ENCODE measurements at regions of chr6 and their contacts with region 1.

Region 1: DNA sequence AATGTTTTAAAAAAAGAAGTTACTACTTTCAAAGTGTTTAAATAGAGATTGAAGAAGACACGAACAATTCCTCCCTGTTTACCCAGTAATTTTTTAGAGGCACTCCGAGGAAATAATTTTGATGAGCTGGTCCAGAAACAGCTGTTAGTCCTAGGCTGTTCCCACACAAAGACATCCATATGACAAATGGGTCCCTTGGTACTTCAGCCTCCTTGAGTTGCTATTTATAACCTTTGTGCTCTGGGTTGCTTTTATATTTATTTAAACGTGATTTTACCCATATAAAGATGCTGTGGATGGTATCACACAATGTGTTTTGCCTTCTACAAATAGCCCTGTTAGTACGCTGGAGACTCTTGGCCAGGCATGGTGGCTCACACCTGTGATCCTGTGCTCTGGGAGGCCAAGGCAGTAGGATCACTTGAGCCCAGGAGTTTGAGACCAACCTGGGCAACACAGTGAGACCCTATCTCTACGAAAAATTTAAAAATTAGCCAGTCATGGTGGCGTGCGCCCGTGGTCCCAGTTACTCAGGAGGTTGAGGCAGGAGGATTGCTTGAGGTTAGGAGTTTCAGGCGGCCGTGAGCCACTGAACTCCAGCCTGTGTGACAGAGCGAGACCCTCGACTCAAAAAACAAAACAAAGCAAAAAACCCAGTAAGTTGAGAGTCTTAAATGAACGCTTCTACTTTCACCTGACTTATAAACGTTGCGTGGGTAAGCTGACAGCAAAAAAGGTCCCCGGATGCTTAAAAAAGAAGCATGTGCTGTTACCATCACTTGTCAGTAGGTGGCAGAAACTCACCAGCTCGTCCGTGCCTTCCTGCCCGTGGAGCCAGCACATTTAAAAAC is 56.9 kb upstream of the ARMH2 start:
- DNase-seq: no peak
- H3K4me3 ChIP-seq: no peak overlapping the region
- H3K27ac ChIP-seq: no peak overlapping the region
- H3K4me1 ChIP-seq: peaks cover 0 to 9% of the 10 kb centered on the region in 2 donors
- H3K27me3 ChIP-seq: no peaks in the 10 kb centered on the region
- CTCF ChIP-seq: peak; percentile 80 to 90 (median 90)
- POLR2A ChIP-seq: no peak

Region 2: DNA sequence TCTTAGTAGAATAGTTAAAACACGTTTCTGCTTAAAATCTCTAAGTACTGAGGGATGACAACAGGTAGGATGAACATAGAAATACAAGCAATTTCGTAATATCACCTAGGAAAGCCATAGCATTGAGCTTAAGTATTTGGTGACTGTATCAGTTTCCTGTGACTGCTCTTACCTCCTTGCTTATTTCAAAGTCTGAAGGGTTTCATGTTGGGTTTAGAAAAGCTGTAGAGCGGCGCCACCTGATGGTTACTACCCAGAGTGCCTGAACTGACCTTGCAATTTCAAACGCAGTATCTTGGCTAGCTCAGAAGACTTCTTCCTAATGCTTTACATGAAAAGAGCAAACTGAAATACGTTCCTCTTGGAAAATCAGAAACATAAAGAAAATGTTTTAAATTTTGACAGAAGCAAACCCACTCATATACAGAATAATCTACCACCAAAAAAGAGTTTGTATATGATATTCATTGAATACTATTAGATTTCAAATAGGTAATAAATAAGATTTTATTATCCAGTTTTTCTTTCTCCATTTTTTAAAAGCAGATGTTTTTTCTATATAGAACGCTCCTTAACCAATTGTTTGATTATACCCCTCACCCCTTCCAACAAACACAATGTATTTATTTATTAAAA is 162.4 kb after region 1 on chr6:
- intact Hi-C with region 1: loop called (anchors 10 kb)
- DNase-seq: peak in 1 of 2 donors; percentile 46
- H3K4me3 ChIP-seq: no peak overlapping the region
- H3K27ac ChIP-seq: peak overlapping the region; percentile 41 to 62
- H3K4me1 ChIP-seq: no peaks in the 10 kb centered on the region
- H3K27me3 ChIP-seq: no peaks in the 10 kb centered on the region
- CTCF ChIP-seq: peak in 2 of 3 donors; percentile 22 to 40
- POLR2A ChIP-seq: no peak

Region 3: DNA sequence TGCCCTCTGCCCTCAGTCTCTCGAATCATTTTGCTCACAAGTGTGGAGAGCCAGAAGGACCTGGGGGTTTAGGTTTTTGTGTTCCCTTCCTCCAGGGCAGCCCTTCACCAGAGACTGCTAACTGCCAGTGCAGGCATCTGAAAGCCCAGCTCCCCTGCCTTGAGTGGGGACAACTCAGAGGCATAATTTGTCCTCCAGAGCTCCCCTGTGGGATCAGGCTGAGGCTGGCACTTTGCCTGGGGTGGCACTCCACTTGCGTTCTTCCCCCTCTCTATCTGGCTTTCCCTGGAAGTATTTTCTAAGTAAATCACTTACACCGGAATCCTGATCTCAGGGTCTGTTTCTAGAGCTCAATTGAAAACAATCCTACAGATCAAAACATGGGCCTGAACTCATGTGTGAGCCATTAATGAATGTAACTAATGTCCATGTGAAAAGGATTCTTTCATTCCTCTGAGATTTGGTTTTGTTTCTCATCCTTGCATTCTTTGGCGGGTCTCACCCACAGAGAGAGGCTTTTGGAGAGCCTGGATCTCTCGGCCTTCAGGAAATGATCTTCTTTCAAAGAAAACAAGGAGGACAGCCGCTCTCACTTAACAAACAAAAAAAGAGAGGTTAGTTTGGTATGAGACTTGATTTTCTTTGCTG is 205.8 kb after region 1 on chr6:
- intact Hi-C with region 1: loop called (anchors 10 kb)
- DNase-seq: no peak
- H3K4me3 ChIP-seq: no peak overlapping the region
- H3K27ac ChIP-seq: peak overlapping the region in 1 of 2 donors; percentile 82
- H3K4me1 ChIP-seq: no peaks in the 10 kb centered on the region
- H3K27me3 ChIP-seq: no peaks in the 10 kb centered on the region
- CTCF ChIP-seq: no peak
- POLR2A ChIP-seq: no peak

Measured in breast epithelium (tissue), 4 donors.